Pancreas (tissue), 10 donors: ENCODE measurements at regions of chr15 and their contacts with region 1.

Region 1: GRCh38 chr15:90071208-90071807 is 31.0 kb downstream of the IDH2 start:
- DNase-seq: peak in 5 of 6 donors; percentile 72 to 81 (median 75)
- ATAC-seq: peak in 3 of 4 donors; percentile 31 to 63 (median 39)
- H3K4me3 ChIP-seq: no peak overlapping the region
- H3K27ac ChIP-seq: peak overlapping the region in 2 of 4 donors; percentile 2 to 46
- H3K4me1 ChIP-seq: peaks cover 22 to 56% (median 31%) of the 10 kb centered on the region in 3 donors
- H3K27me3 ChIP-seq: no peaks in the 10 kb centered on the region
- CTCF ChIP-seq: peak; percentile 54 to 75 (median 66)

Region 2: DNA sequence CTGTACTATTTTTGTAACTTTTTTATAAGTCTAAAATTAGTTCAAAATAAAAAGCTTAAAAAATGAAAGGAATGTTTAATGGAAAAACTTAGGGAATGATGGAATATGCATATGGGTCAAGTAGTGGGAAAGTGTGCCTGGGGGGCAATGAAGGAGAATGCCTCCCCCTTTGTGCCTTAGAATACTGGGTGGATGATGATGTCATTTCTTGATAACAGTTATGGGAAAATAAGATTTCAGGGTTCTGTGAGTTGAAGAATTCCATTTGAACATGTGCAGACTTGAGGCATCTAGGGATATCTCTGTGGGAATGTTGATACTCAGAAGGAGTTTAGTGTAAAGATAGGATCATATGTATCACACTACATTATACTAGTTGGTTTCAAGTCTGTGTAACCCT is 366.9 kb before region 1 on chr15:
- intact Hi-C with region 1: no loop called
- DNase-seq: no peak
- ATAC-seq: no peak
- H3K4me3 ChIP-seq: no peak overlapping the region
- H3K27ac ChIP-seq: no peak overlapping the region
- H3K4me1 ChIP-seq: no peaks in the 10 kb centered on the region
- H3K27me3 ChIP-seq: no peaks in the 10 kb centered on the region
- CTCF ChIP-seq: no peak

Region 3: DNA sequence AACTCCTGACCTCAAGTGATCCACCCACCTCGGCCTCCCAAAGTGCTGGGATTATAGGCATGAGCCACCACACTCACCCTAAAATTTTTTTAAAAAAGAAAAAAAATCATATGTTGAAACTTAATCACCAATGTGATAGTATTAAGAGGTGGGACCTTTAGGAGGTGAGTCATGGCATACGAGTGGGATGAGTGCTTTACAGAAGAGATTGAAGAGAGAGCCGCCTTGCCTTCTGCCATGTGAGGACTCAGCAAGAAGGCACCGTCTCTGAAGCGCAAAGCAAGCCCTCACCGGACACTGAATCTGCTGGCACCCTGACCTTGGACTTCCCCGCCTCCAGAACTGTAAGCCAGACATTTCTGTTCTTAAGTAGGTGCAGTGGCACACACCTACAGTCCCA is 164.0 kb before region 1 on chr15:
- intact Hi-C with region 1: loop called in 1 of 3 experiments (anchors 5 kb)
- DNase-seq: no peak
- ATAC-seq: no peak
- H3K4me3 ChIP-seq: no peak overlapping the region
- H3K27ac ChIP-seq: no peak overlapping the region
- H3K4me1 ChIP-seq: peaks cover 0 to 16% (median 10%) of the 10 kb centered on the region in 3 donors
- H3K27me3 ChIP-seq: no peaks in the 10 kb centered on the region
- CTCF ChIP-seq: no peak

Region 4: GRCh38 chr15:89975482-89976245 is 95.6 kb before region 1 on chr15:
- intact Hi-C with region 1: no loop called
- DNase-seq: no peak
- ATAC-seq: peak in 1 of 4 donors; percentile 55
- H3K4me3 ChIP-seq: no peak overlapping the region
- H3K27ac ChIP-seq: peak overlapping the region in 1 of 4 donors; percentile 27
- H3K4me1 ChIP-seq: no peaks in the 10 kb centered on the region
- H3K27me3 ChIP-seq: no peaks in the 10 kb centered on the region
- CTCF ChIP-seq: no peak

Region 5: DNA sequence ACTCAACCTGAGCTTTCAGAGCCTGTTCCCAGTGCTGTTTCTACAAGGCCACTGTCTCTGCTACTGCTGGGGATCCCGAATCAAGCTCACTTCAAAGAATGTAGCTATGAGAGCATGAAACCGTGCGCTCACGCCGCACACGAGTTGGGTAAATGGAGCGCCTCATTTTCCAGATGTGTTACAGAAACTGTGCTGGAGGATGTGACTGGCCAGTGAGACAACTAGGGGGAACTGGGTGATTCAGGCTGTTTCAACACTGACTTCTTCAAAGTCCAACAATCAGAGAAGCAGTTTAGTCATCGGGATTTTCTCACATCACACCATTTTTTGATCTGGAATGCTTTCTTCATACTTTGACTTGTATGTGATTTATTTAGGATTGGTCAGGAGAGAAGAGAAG is 66.6 kb before region 1 on chr15:
- intact Hi-C with region 1: loop called in 2 of 3 experiments (anchors 5 kb)
- DNase-seq: peak in 1 of 6 donors; percentile 31
- ATAC-seq: peak in 2 of 4 donors; percentile 6 to 43
- H3K4me3 ChIP-seq: peak overlapping the region in 1 of 4 donors; percentile 82
- H3K27ac ChIP-seq: peak overlapping the region in 3 of 4 donors; percentile 74 to 93 (median 93)
- H3K4me1 ChIP-seq: peaks cover 22 to 45% (median 35%) of the 10 kb centered on the region in 3 donors
- H3K27me3 ChIP-seq: no peaks in the 10 kb centered on the region
- CTCF ChIP-seq: no peak

Region 6: GRCh38 chr15:90114451-90114901 is 43.2 kb after region 1 on chr15:
- intact Hi-C with region 1: no loop called
- DNase-seq: no peak
- ATAC-seq: no peak
- H3K4me3 ChIP-seq: no peak overlapping the region
- H3K27ac ChIP-seq: no peak overlapping the region
- H3K4me1 ChIP-seq: no peaks in the 10 kb centered on the region
- H3K27me3 ChIP-seq: no peaks in the 10 kb centered on the region
- CTCF ChIP-seq: no peak